ENCODE measurements at regions of chr19 and their contacts with region 1.

Region 1: DNA sequence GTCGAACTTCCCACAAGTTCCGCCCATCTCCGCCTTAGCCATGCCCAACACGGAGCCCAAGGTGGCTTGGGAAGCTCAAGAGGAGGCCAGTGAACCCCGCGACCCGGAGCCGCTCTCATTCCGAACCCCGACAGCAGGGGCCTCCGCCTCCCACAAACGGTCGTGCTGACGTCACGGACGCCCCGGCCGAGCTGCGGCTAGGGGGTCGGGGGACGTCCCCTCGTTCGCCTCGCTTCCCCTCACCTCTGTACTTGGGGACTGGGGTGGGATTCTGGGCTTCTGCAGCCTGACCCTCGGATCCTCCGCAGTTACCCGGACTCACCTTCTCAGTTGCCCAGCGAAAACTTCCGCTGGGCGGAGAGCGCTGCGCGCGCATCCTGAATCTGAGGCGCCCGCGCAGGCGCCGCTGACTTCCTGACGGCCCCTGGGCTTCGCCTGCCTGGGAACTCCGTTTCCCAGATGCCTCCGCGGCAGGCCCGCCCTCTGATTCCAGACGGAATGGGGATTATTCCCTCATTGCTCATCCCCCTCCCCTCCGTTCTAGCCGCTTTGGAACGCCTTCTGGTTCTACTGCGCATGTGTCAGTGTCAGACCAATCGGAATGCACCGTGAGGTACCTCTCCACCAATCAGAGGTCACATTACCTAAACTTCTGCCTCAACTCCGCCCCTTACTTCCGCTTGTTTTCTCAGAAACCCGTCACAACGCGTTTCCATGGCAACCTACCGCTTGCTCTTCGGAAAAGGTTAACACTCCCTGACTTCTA is at the start of gene VRK3:
- DNase-seq: peak; percentile 99 to 100
- H3K4me3 ChIP-seq: peak within 1 kb of the TSS; percentile 84 to 95
- H3K27ac ChIP-seq: peak within 1 kb of the TSS; percentile 87 to 94
- H3K4me1 ChIP-seq: peaks cover 15 to 22% of the 10 kb centered on the region in 2 donors
- H3K27me3 ChIP-seq: no peaks in the 10 kb centered on the region
- CTCF ChIP-seq: peak in 1 of 3 experiments; percentile 23
- total RNA-seq, gene VRK3: 27.6 TPM

Region 2: GRCh38 chr19:49929611-49930482 is 95.4 kb before region 1 on chr19:
- intact Hi-C with region 1: loop called (anchors 2 kb)
- DNase-seq: peak; percentile 82 to 95
- H3K4me3 ChIP-seq: peak overlapping the region; percentile 71 to 88
- H3K27ac ChIP-seq: peak overlapping the region; percentile 73 to 91
- H3K4me1 ChIP-seq: peaks cover 3 to 13% of the 10 kb centered on the region in 2 donors
- H3K27me3 ChIP-seq: no peaks in the 10 kb centered on the region
- CTCF ChIP-seq: no peak

Region 3: GRCh38 chr19:49983645-49984229 is 41.5 kb before region 1 on chr19:
- intact Hi-C with region 1: loop called (anchors 5 kb)
- DNase-seq: peak in 1 of 2 donors; percentile 74
- H3K4me3 ChIP-seq: no peak overlapping the region
- H3K27ac ChIP-seq: no peak overlapping the region
- H3K4me1 ChIP-seq: no peaks in the 10 kb centered on the region
- H3K27me3 ChIP-seq: no peaks in the 10 kb centered on the region
- CTCF ChIP-seq: peak; percentile 73 to 78 (median 75)

Region 4: GRCh38 chr19:50003810-50004419 is 21.3 kb before region 1 on chr19:
- intact Hi-C with region 1: loop called (anchors 1 kb)
- DNase-seq: peak; percentile 46 to 90
- H3K4me3 ChIP-seq: peak overlapping the region in 1 of 2 donors; percentile 50
- H3K27ac ChIP-seq: peak overlapping the region; percentile 89 to 95
- H3K4me1 ChIP-seq: peaks cover 22 to 24% of the 10 kb centered on the region in 2 donors
- H3K27me3 ChIP-seq: no peaks in the 10 kb centered on the region
- CTCF ChIP-seq: no peak

Region 5: GRCh38 chr19:50461066-50461875 is 436.1 kb after region 1 on chr19:
- intact Hi-C with region 1: no loop called
- DNase-seq: no peak
- H3K4me3 ChIP-seq: no peak overlapping the region
- H3K27ac ChIP-seq: no peak overlapping the region
- H3K4me1 ChIP-seq: no peaks in the 10 kb centered on the region
- H3K27me3 ChIP-seq: peaks cover 5% of the 10 kb centered on the region
- CTCF ChIP-seq: peak; percentile 53 to 63 (median 57)

Region 6: GRCh38 chr19:50804420-50805272 is 779.4 kb after region 1 on chr19:
- intact Hi-C with region 1: loop called (anchors 10 kb)
- DNase-seq: peak; percentile 95 to 99
- H3K4me3 ChIP-seq: peak overlapping the region; percentile 92 to 93
- H3K27ac ChIP-seq: peak overlapping the region; percentile 97
- H3K4me1 ChIP-seq: peaks cover 0 to 13% of the 10 kb centered on the region in 2 donors
- H3K27me3 ChIP-seq: no peaks in the 10 kb centered on the region
- CTCF ChIP-seq: no peak